ENCODE measurements at regions of chr6 and their contacts with region 1.

Region 1: GRCh38 chr6:149028767-149029405 is 282.1 kb downstream of the UST start:
- DNase-seq: peak; percentile 93
- H3K4me3 Mint-ChIP-seq: peak overlapping the region; percentile 52
- H3K27ac Mint-ChIP-seq: peak overlapping the region; percentile 74
- H3K4me1 Mint-ChIP-seq: peaks cover 49% of the 10 kb centered on the region
- H3K27me3 Mint-ChIP-seq: no peaks in the 10 kb centered on the region

Region 2: GRCh38 chr6:148611234-148611633 is 417.7 kb before region 1 on chr6:
- intact Hi-C with region 1: no loop called
- DNase-seq: peak; percentile 44
- H3K4me3 Mint-ChIP-seq: no peak overlapping the region
- H3K27ac Mint-ChIP-seq: no peak overlapping the region
- H3K4me1 Mint-ChIP-seq: no peaks in the 10 kb centered on the region
- H3K27me3 Mint-ChIP-seq: peaks cover 9% of the 10 kb centered on the region

Region 3: DNA sequence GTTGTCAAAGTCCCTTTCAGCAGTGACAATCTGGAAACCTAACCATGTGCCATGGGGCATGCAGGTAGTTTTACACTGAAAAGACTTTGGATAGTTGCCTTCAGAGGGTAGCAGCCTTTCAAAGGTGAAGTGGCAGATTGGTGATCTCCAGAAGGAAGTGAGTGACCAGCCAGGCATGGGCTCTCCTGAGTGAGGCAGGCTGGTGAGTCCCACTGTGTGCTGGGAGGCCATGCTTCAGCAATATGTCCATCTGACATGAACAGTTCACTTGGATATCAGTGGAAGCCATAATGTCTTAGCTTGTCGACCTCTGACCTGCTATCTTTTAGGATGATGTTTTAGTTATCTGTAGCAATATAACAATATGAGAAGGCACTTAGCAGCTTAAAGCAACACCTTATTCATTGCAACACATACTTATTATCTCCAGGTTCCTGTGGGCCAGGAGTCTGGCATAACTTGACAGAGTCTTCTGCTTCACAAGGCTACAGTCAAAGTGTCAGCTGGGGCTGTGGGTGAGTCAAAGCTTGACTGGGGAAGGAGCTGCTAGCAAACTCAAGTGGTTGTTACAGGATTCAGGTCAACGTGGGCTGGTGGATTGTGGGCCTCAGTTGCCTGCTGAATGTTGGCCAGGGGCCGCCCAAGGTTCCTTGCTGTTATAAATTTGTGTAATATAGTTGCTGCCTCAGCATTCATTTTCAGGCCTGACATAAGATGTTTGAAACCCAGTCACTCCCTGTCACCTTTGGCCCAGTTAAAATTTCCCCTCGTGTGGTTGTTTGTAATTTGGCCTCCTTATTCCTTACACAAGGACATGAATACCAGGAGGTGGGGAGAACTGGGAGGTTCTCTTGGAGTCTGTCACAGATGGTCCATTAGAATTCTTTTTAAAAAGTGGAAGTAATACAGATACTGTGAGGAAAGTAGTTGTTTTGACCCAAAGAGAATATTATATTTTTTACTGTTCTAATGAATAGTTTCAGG is 181.8 kb before region 1 on chr6:
- intact Hi-C with region 1: no loop called
- DNase-seq: no peak
- H3K4me3 Mint-ChIP-seq: no peak overlapping the region
- H3K27ac Mint-ChIP-seq: no peak overlapping the region
- H3K4me1 Mint-ChIP-seq: no peaks in the 10 kb centered on the region
- H3K27me3 Mint-ChIP-seq: no peaks in the 10 kb centered on the region

Region 4: DNA sequence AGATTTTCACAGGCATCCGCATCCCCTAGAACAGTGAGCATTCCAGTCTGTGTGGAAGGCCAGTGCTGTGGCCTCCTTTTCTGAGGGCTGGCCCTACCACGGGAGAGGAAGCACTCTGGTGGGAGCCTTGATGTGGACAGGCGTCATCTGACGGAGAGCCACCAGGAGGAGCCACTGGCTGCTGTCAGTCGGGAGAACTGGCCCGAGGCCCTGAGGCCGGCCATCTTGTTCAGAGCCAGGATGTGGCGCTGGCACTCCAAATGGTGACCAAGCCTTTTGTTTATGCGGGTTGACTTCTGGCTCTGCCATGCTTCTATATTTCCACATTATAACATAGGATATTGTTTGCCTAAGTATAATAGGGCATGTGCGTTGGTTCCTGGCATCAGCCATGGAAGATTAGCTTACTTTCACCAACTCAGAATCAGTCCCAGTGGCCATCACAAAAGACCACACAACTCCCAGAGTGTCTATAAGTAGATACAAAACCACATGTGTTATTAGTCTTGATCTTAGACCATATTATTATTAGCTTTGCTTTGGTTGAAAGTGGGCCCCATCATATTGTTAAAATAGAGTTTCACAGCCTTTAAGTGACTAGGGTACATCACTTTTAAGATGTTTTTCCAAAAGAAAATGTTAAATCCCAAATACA is 14.7 kb after region 1 on chr6:
- intact Hi-C with region 1: no loop called
- DNase-seq: peak; percentile 72
- H3K4me3 Mint-ChIP-seq: no peak overlapping the region
- H3K27ac Mint-ChIP-seq: no peak overlapping the region
- H3K4me1 Mint-ChIP-seq: peaks cover 61% of the 10 kb centered on the region
- H3K27me3 Mint-ChIP-seq: no peaks in the 10 kb centered on the region

Region 5: GRCh38 chr6:149060300-149060997 is 31.6 kb after region 1 on chr6:
- intact Hi-C with region 1: loop called (anchors 1 kb)
- DNase-seq: peak; percentile 88
- H3K4me3 Mint-ChIP-seq: peak overlapping the region; percentile 80
- H3K27ac Mint-ChIP-seq: peak overlapping the region; percentile 95
- H3K4me1 Mint-ChIP-seq: peaks cover 57% of the 10 kb centered on the region
- H3K27me3 Mint-ChIP-seq: no peaks in the 10 kb centered on the region

Region 6: DNA sequence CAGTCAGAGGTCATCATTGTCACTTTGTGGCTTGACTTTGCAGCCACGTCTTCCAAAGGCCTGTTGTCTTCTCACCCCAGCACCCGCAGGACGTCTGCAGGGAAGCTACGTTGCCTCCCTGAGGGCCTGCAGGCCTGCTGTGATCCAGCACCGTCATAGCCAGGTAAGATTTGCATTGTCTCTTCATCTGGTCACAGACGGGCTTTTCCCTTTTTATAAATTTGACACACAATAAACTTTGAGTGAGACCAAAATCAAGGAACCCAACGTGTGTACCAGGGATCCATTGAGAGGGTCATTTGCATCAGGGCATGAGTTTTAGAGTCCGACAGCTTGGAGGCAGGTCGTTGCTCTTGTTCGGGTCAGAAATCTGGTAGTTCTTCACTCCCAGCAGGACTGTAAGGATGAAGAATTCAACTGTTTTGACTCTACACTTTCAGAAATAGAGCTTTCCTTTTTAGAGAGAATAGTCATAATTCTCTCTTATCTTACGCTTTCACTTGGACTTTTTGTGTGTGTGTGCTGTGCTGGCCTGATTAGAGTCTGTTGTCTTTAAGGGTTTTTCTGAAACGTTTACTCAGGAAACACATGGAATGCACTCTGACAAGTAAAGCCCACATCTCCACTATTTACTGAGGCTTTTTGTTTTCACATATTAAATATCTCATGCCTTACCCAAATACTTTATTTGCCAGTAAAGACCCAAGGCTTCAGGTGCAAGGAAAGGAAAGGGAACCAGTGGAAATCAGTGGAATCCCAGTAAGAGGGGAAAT is 111.4 kb after region 1 on chr6:
- intact Hi-C with region 1: loop called (anchors 1 kb)
- DNase-seq: peak; percentile 87
- H3K4me3 Mint-ChIP-seq: peak overlapping the region; percentile 85
- H3K27ac Mint-ChIP-seq: peak overlapping the region; percentile 100
- H3K4me1 Mint-ChIP-seq: peaks cover 48% of the 10 kb centered on the region
- H3K27me3 Mint-ChIP-seq: no peaks in the 10 kb centered on the region

Region 7: DNA sequence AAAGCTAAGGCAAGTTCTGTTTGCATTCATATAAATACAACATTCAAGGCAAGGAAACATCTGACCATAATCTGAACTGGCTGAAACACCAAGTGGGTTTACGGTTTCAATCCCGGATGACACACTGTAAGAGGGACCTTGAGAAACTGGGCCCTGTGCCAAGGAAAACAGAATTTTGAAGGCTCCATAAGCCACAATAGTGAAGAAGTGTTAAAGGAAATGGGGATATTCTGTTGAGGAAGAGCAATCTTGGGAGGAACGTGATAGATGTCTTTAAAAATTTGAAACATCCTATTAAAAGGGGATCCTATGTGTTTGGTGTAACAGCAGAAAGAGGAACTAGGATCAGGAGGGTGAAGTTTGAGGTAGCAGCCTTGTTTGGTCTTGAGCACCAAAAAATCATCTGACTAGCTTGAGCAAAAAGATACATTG is 206.3 kb after region 1 on chr6:
- intact Hi-C with region 1: loop called (anchors 1 kb)
- DNase-seq: no peak
- H3K4me3 Mint-ChIP-seq: peak overlapping the region; percentile 74
- H3K27ac Mint-ChIP-seq: peak overlapping the region; percentile 98
- H3K4me1 Mint-ChIP-seq: peaks cover 53% of the 10 kb centered on the region
- H3K27me3 Mint-ChIP-seq: no peaks in the 10 kb centered on the region

Region 8: GRCh38 chr6:149389509-149390297 is 360.8 kb after region 1 on chr6:
- intact Hi-C with region 1: loop called (anchors 1 kb)
- DNase-seq: no peak
- H3K4me3 Mint-ChIP-seq: no peak overlapping the region
- H3K27ac Mint-ChIP-seq: peak overlapping the region; percentile 46
- H3K4me1 Mint-ChIP-seq: peaks cover 60% of the 10 kb centered on the region
- H3K27me3 Mint-ChIP-seq: no peaks in the 10 kb centered on the region

Region 9: GRCh38 chr6:149508485-149508884 is 479.6 kb after region 1 on chr6:
- intact Hi-C with region 1: loop called (anchors 2 kb)
- DNase-seq: peak; percentile 83
- H3K4me3 Mint-ChIP-seq: peak overlapping the region; percentile 33
- H3K27ac Mint-ChIP-seq: peak overlapping the region; percentile 92
- H3K4me1 Mint-ChIP-seq: peaks cover 41% of the 10 kb centered on the region
- H3K27me3 Mint-ChIP-seq: no peaks in the 10 kb centered on the region

Region 10: GRCh38 chr6:149840345-149841075 is 811.6 kb after region 1 on chr6:
- intact Hi-C with region 1: no loop called
- DNase-seq: peak; percentile 88
- H3K4me3 Mint-ChIP-seq: no peak overlapping the region
- H3K27ac Mint-ChIP-seq: no peak overlapping the region
- H3K4me1 Mint-ChIP-seq: no peaks in the 10 kb centered on the region
- H3K27me3 Mint-ChIP-seq: peaks cover 18% of the 10 kb centered on the region